Ascending aorta (tissue), 2 donors: ENCODE measurements at regions of chr20 and their contacts with region 1.

Region 1: DNA sequence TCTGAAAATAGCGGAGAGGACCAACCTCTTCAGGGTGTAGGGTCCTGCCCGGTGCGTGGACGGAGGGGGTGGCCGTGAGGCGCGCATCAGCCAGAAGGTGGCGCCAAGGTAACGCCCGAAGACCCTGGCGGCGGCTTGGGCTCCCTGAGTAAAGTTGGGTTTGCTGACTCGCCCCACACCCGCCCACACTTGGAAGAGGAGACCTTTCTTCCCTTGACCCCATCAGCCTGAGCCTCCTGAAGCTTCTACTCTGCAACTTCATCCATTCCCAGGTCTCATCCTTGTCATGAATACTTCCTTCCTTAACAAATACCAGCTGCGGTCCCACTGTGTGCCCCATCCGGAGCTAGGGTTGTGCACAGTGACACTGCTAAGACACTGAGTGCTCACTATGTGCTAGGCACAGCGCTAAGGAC is 14.6 kb downstream of the CD40 start:
- DNase-seq: peak in 1 of 2 donors; percentile 77
- H3K4me3 ChIP-seq: no peak overlapping the region
- H3K27ac ChIP-seq: no peak overlapping the region
- H3K4me1 ChIP-seq: peaks cover 0 to 14% of the 10 kb centered on the region in 2 donors
- H3K27me3 ChIP-seq: no peaks in the 10 kb centered on the region
- CTCF ChIP-seq: peak; percentile 70 to 72 (median 72)

Region 2: GRCh38 chr20:46349035-46349741 is 216.5 kb after region 1 on chr20:
- intact Hi-C with region 1: loop called (anchors 2 kb)
- DNase-seq: peak in 1 of 2 donors; percentile 72
- H3K4me3 ChIP-seq: no peak overlapping the region
- H3K27ac ChIP-seq: no peak overlapping the region
- H3K4me1 ChIP-seq: no peaks in the 10 kb centered on the region
- H3K27me3 ChIP-seq: no peaks in the 10 kb centered on the region
- CTCF ChIP-seq: peak; percentile 52 to 66 (median 54)